OCI-LY7 (cell line): ENCODE measurements at regions of chr1 and their contacts with region 1.

Region 1: GRCh38 chr1:178542560-178543356 is 29.8 kb downstream of the TEX35 start:
- DNase-seq: peak; percentile 88
- H3K4me3 ChIP-seq: peak overlapping the region; percentile 75
- H3K27ac ChIP-seq: peak overlapping the region; percentile 84
- H3K4me1 ChIP-seq: peaks cover 31% of the 10 kb centered on the region
- CTCF ChIP-seq: peak; percentile 94

Region 2: DNA sequence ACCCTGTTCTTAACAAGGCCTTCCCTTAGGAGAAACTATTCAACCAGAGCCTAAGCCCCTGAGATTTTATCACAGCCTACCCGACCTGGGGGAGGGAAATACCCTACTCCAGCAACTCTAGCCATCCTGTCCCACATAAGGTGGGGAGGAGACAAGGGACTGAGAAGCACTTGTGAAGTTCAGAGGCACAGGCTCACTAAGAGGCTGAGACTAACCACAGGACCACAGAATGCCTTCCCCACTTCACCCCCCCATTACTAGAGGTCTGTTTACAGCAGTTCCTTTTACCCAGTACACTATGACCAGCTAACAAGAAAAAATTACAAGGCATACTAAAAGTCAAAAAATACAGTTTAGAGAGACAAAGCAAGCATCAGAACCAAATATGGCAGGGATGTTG is 57.0 kb after region 1 on chr1:
- CTCF ChIA-PET with region 1: no interaction called
- POLR2A ChIA-PET with region 1: interaction called, 60 read pairs
- intact Hi-C with region 1: no loop called
- DNase-seq: peak; percentile 56
- H3K4me3 ChIP-seq: peak overlapping the region; percentile 2
- H3K27ac ChIP-seq: peak overlapping the region; percentile 43
- H3K4me1 ChIP-seq: peaks cover 69% of the 10 kb centered on the region
- CTCF ChIP-seq: no peak

Region 3: DNA sequence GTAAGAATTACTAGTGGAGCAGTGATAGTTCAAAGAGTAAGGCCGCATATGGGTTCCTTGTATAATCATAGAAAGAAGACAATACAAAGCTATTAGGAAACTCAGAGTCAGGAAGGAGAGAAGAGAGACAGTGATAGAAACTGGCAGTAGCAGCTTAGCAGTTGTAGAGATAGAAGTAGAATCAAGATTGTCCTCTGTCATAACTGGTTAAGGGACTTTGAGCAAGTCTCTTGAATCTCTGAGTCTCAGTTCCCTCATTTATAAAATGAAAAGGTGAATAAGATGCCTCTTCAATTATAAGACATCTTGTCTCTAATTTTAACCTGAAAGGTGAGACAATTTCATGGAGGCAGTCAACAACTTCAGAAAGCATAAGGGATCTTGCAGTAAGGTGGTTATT is 175.8 kb after region 1 on chr1:
- CTCF ChIA-PET with region 1: no interaction called
- POLR2A ChIA-PET with region 1: interaction called, 12 read pairs
- intact Hi-C with region 1: no loop called
- DNase-seq: peak; percentile 27
- H3K4me3 ChIP-seq: no peak overlapping the region
- H3K27ac ChIP-seq: no peak overlapping the region
- H3K4me1 ChIP-seq: peaks cover 24% of the 10 kb centered on the region
- CTCF ChIP-seq: no peak

Region 4: GRCh38 chr1:178774263-178774662 is 231.5 kb after region 1 on chr1:
- CTCF ChIA-PET with region 1: no interaction called
- POLR2A ChIA-PET with region 1: interaction called, 4 read pairs
- intact Hi-C with region 1: loop called (anchors 2 kb)
- DNase-seq: peak; percentile 48
- H3K4me3 ChIP-seq: no peak overlapping the region
- H3K27ac ChIP-seq: no peak overlapping the region
- H3K4me1 ChIP-seq: no peaks in the 10 kb centered on the region
- CTCF ChIP-seq: peak; percentile 83

Region 5: GRCh38 chr1:179025125-179025974 is 482.6 kb after region 1 on chr1 and contains the start of gene FAM20B:
- CTCF ChIA-PET with region 1: no interaction called
- POLR2A ChIA-PET with region 1: interaction called, 3 read pairs
- intact Hi-C with region 1: loop called (anchors 1 kb)
- DNase-seq: peak; percentile 96
- H3K4me3 ChIP-seq: peak within 1 kb of the TSS; percentile 78
- H3K27ac ChIP-seq: peak within 1 kb of the TSS; percentile 82
- H3K4me1 ChIP-seq: peaks cover 50% of the 10 kb centered on the region
- CTCF ChIP-seq: no peak
- total RNA-seq, gene FAM20B: 16.6 and 17.1 TPM in 2 replicates

Region 6: GRCh38 chr1:179293340-179294327 is 750.9 kb after region 1 on chr1 and contains the start of gene SOAT1:
- CTCF ChIA-PET with region 1: no interaction called
- POLR2A ChIA-PET with region 1: no interaction called
- intact Hi-C with region 1: loop called (anchors 5 kb)
- DNase-seq: peak; percentile 97
- H3K4me3 ChIP-seq: peak within 1 kb of the TSS; percentile 80
- H3K27ac ChIP-seq: peak within 1 kb of the TSS; percentile 63
- H3K4me1 ChIP-seq: peaks cover 42% of the 10 kb centered on the region
- CTCF ChIP-seq: 0 out of 2 replicates have a peak, but pooled peaks have one; percentile 10
- total RNA-seq, gene SOAT1: 8.7 and 11.1 TPM in 2 replicates